HEK293 (cell line): ENCODE measurements at regions of chr14 and their contacts with region 1.

Region 1: GRCh38 chr14:68911594-68912227 is 67.4 kb downstream of the ACTN1 start:
- H3K4me3 ChIP-seq: no peak overlapping the region
- H3K27ac ChIP-seq: no peak overlapping the region
- H3K4me1 ChIP-seq: no peaks in the 10 kb centered on the region
- CTCF ChIP-seq: peak; percentile 81

Region 2: DNA sequence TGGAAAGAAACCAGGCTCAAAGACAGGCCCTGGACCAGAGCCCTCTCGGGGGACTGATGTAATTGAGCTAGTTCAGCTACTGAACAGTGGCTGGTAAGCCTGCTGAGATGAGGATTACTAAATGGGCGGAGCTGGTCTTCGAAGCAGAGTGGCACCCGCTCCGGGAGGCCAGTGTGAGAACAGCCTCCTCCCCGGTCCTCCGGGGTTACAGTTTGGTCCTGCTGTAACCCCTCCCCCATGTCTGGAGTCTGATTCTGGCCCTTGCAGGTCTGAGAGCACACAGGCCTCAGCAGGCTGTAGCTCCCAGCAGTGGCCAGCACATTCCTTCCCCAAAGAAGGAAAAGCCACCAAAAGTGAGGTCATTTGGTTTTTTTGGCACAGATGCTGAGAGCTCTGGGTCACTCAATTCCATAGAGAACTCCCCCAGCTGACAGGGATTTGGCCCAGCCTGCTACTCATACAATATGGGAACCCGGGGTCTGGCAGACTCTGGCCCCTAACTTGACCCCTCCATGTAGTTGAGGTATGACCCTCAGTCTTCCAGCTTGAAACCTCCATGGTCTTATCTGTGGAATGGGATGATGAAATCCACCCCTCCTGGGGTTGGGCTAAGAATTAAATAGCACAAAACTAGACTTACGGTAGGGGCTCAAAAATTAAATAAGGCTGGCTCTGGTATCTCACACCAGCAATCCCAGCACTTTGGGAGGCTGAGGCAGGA is 28.3 kb after region 1 on chr14:
- CTCF ChIA-PET with region 1: interaction called, 41 read pairs
- POLR2A ChIA-PET with region 1: interaction called, 3 read pairs
- H3K4me3 ChIP-seq: no peak overlapping the region
- H3K27ac ChIP-seq: peak overlapping the region; percentile 29; the same call in 1 of the 2 replicates
- H3K4me1 ChIP-seq: peaks cover 11% of the 10 kb centered on the region
- CTCF ChIP-seq: no peak

Region 3: DNA sequence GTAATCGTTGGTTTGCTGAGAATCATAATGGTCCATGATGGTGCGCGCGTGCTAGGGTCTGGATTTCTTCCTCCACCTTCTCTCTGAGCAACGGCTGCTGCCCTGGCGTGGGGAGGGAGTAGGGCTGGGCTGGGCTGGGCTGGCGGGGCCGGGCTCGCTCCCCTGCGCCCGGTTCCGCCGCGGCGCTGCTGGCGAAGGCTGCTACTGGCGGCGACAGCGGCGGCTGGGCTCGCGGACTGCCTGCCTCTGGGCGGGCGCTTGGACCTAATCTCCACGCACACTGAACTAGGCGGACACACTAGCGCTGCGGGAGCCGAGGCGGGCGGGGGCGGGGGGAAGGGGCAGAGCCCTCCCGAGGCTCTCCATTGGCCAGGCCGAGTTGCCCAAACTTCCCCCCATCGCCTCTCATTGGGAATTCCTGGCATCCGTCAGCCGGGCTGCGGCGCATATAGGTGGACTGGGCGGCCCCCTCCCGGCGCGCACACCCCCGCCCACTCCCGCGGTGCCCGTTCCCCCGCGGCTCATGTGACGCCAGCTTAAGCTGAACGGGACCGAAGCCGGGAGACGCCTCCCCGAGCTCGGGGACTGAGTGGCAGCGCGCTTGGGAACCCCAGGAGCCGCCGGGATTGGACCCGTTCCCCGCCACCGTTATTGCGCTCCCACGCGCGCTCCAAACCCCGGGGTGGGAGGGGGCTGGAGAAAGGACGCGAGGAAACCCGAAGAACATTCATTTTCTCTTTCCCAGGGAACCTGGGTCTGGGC is 67.5 kb after region 1 on chr14 and contains the start of gene ACTN1:
- CTCF ChIA-PET with region 1: interaction called, 14 read pairs
- POLR2A ChIA-PET with region 1: no interaction called
- H3K4me3 ChIP-seq: peak within 1 kb of the TSS; percentile 96
- H3K27ac ChIP-seq: peak within 1 kb of the TSS; percentile 95
- H3K4me1 ChIP-seq: peaks cover 10% of the 10 kb centered on the region
- CTCF ChIP-seq: no peak

Region 4: GRCh38 chr14:69101331-69101826 is 189.7 kb after region 1 on chr14:
- CTCF ChIA-PET with region 1: interaction called, 98 read pairs
- POLR2A ChIA-PET with region 1: no interaction called
- H3K4me3 ChIP-seq: no peak overlapping the region
- H3K27ac ChIP-seq: no peak overlapping the region
- H3K4me1 ChIP-seq: no peaks in the 10 kb centered on the region
- CTCF ChIP-seq: no peak